ENCODE measurements at regions of chr3 and their contacts with region 1.

Region 1: GRCh38 chr3:15557511-15557946 is 36.0 kb upstream of the COLQ start:
- DNase-seq: peak; percentile 82
- ATAC-seq: peak; percentile 98
- H3K4me3 Mint-ChIP-seq: no peak overlapping the region
- H3K27ac Mint-ChIP-seq: peak overlapping the region; percentile 68
- H3K4me1 Mint-ChIP-seq: peaks cover 17% of the 10 kb centered on the region
- H3K27me3 Mint-ChIP-seq: no peaks in the 10 kb centered on the region
- CTCF ChIP-seq: peak; percentile 85

Region 2: GRCh38 chr3:15405448-15406050 is 152.0 kb before region 1 on chr3:
- CTCF ChIA-PET with region 1: interaction called, 11 read pairs
- POLR2A ChIA-PET with region 1: no interaction called
- intact Hi-C with region 1: no loop called
- DNase-seq: peak; percentile 35
- ATAC-seq: peak; percentile 67
- H3K4me3 Mint-ChIP-seq: no peak overlapping the region
- H3K27ac Mint-ChIP-seq: no peak overlapping the region
- H3K4me1 Mint-ChIP-seq: no peaks in the 10 kb centered on the region
- H3K27me3 Mint-ChIP-seq: no peaks in the 10 kb centered on the region
- CTCF ChIP-seq: peak; percentile 63

Region 3: DNA sequence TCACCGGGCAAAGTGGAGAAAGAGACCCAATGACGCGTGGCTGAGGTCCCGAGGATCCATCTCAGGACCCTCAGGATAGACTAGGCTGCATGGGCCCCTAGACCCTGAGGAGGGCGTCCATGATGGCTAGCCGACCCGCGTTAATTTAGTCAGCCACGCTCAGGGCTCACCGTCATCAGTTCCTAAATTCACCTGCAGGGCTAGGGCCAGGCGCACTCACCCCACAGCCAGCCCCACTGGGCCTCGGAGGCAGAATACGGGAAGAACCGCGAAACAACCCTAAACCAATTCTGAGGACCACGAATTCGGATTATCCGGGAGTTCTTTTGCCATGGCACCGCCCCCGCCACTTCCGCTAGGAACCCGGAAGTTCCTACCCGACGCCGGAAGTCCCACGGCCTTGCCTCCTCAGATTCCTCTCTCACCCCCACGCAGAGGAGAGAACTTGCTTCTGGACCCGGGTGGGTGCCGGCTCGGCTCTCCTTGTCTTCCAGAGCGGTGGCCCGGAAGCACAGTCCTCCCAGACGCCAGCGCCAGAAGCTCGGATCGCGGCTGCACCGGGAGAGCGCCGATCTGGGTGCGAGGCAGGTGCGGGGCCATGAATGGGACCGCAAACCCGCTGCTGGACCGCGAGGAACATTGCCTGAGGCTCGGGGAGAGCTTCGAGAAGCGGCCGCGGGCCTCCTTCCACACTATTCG is 130.2 kb before region 1 on chr3 and contains the starts of genes EAF1 and METTL6:
- CTCF ChIA-PET with region 1: interaction called, 15 read pairs
- POLR2A ChIA-PET with region 1: interaction called, 3 read pairs
- intact Hi-C with region 1: loop called (anchors 5 kb)
- DNase-seq: peak; percentile 91
- ATAC-seq: peak; percentile 85
- H3K4me3 Mint-ChIP-seq: peak within 1 kb of the TSS; percentile 87
- H3K27ac Mint-ChIP-seq: peak within 1 kb of the TSS; percentile 99
- H3K4me1 Mint-ChIP-seq: peaks cover 43% of the 10 kb centered on the region
- H3K27me3 Mint-ChIP-seq: no peaks in the 10 kb centered on the region
- CTCF ChIP-seq: peak; percentile 45
- total RNA-seq, gene EAF1: 19.7 to 21.8 TPM
- total RNA-seq, gene METTL6: 17.5 to 19.2 TPM

Region 4: GRCh38 chr3:15498431-15499214 is 58.9 kb before region 1 on chr3:
- CTCF ChIA-PET with region 1: interaction called, 4 read pairs
- POLR2A ChIA-PET with region 1: no interaction called
- intact Hi-C with region 1: loop called (anchors 5 kb)
- DNase-seq: no peak
- ATAC-seq: no peak
- H3K4me3 Mint-ChIP-seq: no peak overlapping the region
- H3K27ac Mint-ChIP-seq: no peak overlapping the region
- H3K4me1 Mint-ChIP-seq: peaks cover 34% of the 10 kb centered on the region
- H3K27me3 Mint-ChIP-seq: no peaks in the 10 kb centered on the region
- CTCF ChIP-seq: no peak

Region 5: DNA sequence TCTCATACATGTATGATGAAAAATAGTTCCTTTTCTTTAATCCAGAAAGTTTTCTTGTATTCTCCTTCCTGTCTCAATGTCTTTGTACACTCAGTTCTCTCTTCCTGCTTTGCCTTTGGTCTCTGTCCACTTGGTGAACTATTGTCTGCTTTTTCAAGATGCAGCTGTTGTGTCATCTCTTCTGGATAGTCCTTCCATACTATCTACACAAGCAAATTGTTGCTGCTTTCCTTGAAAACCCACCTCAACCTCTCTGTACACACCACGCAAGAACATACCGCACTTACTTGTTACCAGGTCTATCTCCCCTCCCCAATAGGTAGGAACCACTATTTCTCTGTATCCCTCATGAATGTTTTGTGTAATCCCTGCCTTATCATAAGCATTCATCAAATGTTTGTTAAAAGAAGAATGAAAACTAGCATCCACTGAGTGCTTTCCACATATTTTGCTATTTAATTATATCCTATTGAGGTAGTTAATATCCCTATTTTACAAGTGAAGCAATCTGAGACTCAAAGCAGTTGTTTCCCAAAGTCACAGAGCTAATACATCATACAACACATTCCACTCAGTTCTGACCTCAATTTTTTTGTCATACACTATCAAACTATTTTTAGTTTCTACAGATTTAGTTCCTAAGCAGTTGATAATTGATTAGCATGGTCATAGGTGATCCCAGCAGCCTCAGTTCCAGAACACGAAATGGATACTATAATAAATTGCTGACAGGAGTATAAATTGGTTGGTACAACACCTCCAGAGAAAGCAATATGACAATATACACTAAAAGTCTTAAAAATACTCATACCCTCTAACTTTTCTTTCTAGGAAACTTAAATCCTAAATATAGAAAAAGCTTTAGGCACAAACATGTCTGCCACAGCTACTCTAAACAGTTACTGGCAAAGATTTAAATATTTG is 24.2 kb after region 1 on chr3:
- CTCF ChIA-PET with region 1: no interaction called
- POLR2A ChIA-PET with region 1: no interaction called
- intact Hi-C with region 1: no loop called
- DNase-seq: no peak
- ATAC-seq: no peak
- H3K4me3 Mint-ChIP-seq: no peak overlapping the region
- H3K27ac Mint-ChIP-seq: no peak overlapping the region
- H3K4me1 Mint-ChIP-seq: no peaks in the 10 kb centered on the region
- H3K27me3 Mint-ChIP-seq: no peaks in the 10 kb centered on the region
- CTCF ChIP-seq: no peak